Dendritic cell treated with granulocyte-macrophage colony-stimulating factor and Interleukin-4, amounts not matched to agents 40 ng/mL and 50 ng/mL, for 4 days (primary cell): ENCODE measurements at regions of chr16 and their contacts with region 1.

Region 1: GRCh38 chr16:78705694-78706093 is 606.2 kb downstream of the WWOX start:
- H3K4me3 Mint-ChIP-seq: no peak overlapping the region
- H3K27ac Mint-ChIP-seq: no peak overlapping the region
- H3K4me1 Mint-ChIP-seq: no peaks in the 10 kb centered on the region
- H3K27me3 Mint-ChIP-seq: no peaks in the 10 kb centered on the region

Region 2: GRCh38 chr16:78770353-78771091 is 64.8 kb after region 1 on chr16:
- intact Hi-C with region 1: loop called (anchors 1 kb)
- H3K4me3 Mint-ChIP-seq: no peak overlapping the region
- H3K27ac Mint-ChIP-seq: no peak overlapping the region
- H3K4me1 Mint-ChIP-seq: peaks cover 6% of the 10 kb centered on the region
- H3K27me3 Mint-ChIP-seq: peaks cover 5% of the 10 kb centered on the region

Region 3: DNA sequence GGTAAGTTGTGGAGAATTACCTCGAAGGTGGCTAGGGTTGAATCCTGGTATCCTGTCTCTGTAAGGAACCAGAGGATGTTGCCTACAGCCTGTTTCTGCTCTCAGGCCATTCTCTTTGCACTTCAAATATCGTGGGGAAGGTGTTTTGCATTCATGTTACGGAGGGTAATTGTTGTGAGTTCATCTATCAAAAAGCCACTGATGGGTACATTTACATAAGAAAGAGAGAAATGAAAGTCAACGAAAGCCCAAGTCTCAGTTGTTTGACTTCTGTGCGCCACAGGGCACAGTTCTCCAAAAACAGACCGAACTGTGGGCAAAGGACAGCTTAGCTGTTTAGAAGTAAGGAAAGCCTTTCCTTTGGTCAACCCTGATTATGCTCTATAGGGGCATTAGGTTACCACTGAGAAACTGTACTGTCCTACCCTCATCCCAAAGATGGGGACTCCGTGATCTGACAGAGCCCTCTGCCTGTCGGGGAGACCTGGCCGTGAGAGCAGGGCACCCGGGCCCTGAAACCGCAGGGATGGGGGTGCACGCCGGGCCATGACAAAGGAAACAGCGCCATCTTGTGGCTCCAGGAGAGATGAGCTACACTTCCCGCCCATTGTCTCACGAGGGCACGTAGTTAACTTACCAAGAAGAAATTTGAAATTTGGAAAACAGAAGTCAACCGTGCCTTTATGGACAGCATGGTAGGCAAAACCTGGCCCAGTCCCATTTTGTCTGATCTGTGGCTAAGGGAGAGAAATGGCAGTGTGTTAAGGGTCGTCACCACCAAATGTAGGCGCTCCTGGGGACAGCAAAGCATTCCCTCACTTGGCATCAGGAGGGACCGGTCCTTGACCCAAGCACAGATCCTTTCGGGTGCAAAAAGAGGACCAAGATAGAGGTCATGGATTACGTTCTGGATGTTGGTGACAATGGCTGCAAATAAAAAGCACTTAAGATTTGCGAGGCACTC is 1760.6 kb after region 1 on chr16:
- intact Hi-C with region 1: loop called (anchors 5 kb)
- H3K4me3 Mint-ChIP-seq: no peak overlapping the region
- H3K27ac Mint-ChIP-seq: no peak overlapping the region
- H3K4me1 Mint-ChIP-seq: no peaks in the 10 kb centered on the region
- H3K27me3 Mint-ChIP-seq: no peaks in the 10 kb centered on the region